IMR-90 (cell line): ENCODE measurements at regions of chr3 and their contacts with region 1.

Region 1: GRCh38 chr3:124905849-124906248 is 18.7 kb upstream of the ITGB5 start:
- DNase-seq: no peak
- ATAC-seq: no peak
- H3K4me3 ChIP-seq: no peak overlapping the region
- H3K27ac ChIP-seq: no peak overlapping the region
- H3K4me1 ChIP-seq: no peaks in the 10 kb centered on the region
- H3K27me3 ChIP-seq: peaks cover 23% of the 10 kb centered on the region
- CTCF ChIP-seq: no peak
- POLR2A ChIP-seq: no peak
- RAD21 ChIP-seq: no peak

Region 2: GRCh38 chr3:124576565-124577493 is 329.0 kb before region 1 on chr3:
- CTCF ChIA-PET with region 1: no interaction called
- POLR2A ChIA-PET with region 1: no interaction called
- dilution Hi-C with region 1: no loop called
- in situ Hi-C with region 1: loop called (anchors 10 kb)
- intact Hi-C with region 1: no loop called
- DNase-seq: no peak
- ATAC-seq: no peak
- H3K4me3 ChIP-seq: no peak overlapping the region
- H3K27ac ChIP-seq: no peak overlapping the region
- H3K4me1 ChIP-seq: no peaks in the 10 kb centered on the region; the same call in 1 of the 2 replicates
- H3K27me3 ChIP-seq: peaks cover 22% of the 10 kb centered on the region
- CTCF ChIP-seq: no peak
- POLR2A ChIP-seq: no peak
- RAD21 ChIP-seq: no peak

Region 3: GRCh38 chr3:124761250-124761796 is 144.5 kb before region 1 on chr3:
- CTCF ChIA-PET with region 1: interaction called, 27 read pairs
- POLR2A ChIA-PET with region 1: no interaction called
- dilution Hi-C with region 1: no loop called
- in situ Hi-C with region 1: loop called (anchors 5 kb)
- intact Hi-C with region 1: loop called (anchors 1 kb)
- DNase-seq: peak; percentile 89
- ATAC-seq: peak; percentile 85
- H3K4me3 ChIP-seq: no peak overlapping the region
- H3K27ac ChIP-seq: no peak overlapping the region
- H3K4me1 ChIP-seq: peaks cover 7% of the 10 kb centered on the region
- H3K27me3 ChIP-seq: no peaks in the 10 kb centered on the region
- CTCF ChIP-seq: peak; percentile 96
- POLR2A ChIP-seq: peak; percentile 39; the same call in 1 of the 2 replicates
- RAD21 ChIP-seq: peak; percentile 98

Region 4: DNA sequence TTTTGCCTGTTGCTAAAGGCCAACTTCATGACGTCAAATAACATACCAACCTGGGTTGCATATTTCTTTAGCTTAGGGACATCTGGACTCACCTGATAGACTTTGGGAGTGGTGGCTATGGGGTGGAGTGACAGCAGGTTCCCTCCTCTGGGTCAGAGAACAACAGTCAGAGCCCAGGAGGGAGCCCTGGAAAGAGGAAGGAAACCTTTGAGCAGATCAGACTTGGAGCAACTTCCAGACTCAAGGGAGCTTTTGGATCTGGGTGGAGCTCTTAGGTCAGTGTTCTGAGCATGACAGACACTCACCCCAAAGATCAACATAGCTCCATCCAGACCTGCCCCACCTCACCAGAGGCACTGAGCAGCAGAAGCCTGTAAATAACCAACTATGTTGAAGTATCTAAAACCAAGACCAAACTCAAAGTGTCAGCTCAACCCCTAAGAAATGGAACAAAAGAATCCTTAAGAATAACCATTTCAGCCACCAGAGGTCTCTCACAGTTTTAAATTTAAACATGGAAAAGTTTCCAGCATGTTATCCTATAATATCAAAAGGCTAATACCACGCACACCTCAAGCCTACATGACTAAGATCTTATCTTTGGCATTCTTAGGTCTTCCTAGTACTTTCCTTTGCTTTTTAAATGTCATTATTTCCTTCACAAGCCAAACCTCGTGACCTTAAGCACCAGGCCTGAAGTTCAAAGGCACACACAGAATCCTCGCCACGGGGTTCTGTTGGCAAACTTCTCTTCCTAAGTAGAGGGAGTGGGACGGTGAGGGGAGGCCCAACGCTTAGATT is 119.2 kb before region 1 on chr3:
- CTCF ChIA-PET with region 1: interaction called, 13 read pairs
- POLR2A ChIA-PET with region 1: no interaction called
- dilution Hi-C with region 1: no loop called
- in situ Hi-C with region 1: no loop called
- intact Hi-C with region 1: loop called (anchors 1 kb)
- DNase-seq: peak; percentile 60
- ATAC-seq: peak; percentile 53
- H3K4me3 ChIP-seq: no peak overlapping the region
- H3K27ac ChIP-seq: no peak overlapping the region
- H3K4me1 ChIP-seq: peaks cover 13% of the 10 kb centered on the region
- H3K27me3 ChIP-seq: no peaks in the 10 kb centered on the region
- CTCF ChIP-seq: peak; percentile 57
- POLR2A ChIP-seq: no peak
- RAD21 ChIP-seq: peak; percentile 55